Right ventricle myocardium inferior (tissue), 1 donor: ENCODE measurements at regions of chr1 and their contacts with region 1.

Region 1: DNA sequence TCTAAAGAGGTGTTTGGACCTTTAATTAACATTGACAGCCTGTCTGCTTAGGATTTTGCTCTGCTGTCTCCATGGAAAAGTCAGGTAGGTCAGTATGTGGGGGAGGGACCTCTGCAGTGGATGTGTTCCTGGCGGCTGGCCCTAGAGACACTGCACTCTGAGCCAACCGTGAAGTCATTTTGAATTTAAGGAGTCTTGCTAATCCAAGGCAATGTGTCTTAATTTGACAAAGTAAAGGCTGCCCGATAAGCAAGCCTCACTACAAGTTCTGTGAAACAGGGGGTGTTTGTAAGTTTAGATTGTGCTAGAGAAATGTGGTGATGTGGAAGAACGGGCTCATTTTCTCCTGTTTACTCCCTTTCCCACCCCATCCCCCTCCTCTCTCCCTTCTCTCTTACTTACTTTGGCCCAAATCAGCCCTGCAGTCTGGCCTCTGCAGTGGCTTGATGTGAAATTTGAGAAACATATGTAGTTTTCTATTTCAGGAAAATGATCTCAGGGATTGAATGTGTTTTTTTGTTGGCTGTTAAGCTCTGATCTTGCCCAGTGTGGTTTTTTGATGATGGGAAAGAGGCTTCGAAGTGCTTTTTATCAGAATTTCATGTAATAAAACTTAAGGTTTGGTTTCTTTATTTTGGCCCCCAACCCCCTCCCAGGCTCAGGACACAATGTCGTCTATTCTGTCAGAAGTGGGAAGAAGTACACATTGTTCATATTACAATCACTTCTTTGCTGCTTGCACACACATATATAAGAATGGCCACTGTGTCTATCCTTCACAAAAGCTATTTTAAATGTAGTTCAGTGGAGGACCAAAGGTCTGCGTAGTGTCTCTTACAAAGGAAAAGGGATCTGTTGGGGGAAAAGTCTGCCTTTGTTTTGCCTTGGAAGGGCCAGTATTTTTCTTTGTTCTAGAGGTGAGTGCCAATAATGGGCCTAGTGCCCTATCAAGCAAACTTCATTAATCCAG is 96.6 kb downstream of the FGGY start:
- DNase-seq: peak; percentile 79
- ATAC-seq: peak; percentile 92

Region 2: DNA sequence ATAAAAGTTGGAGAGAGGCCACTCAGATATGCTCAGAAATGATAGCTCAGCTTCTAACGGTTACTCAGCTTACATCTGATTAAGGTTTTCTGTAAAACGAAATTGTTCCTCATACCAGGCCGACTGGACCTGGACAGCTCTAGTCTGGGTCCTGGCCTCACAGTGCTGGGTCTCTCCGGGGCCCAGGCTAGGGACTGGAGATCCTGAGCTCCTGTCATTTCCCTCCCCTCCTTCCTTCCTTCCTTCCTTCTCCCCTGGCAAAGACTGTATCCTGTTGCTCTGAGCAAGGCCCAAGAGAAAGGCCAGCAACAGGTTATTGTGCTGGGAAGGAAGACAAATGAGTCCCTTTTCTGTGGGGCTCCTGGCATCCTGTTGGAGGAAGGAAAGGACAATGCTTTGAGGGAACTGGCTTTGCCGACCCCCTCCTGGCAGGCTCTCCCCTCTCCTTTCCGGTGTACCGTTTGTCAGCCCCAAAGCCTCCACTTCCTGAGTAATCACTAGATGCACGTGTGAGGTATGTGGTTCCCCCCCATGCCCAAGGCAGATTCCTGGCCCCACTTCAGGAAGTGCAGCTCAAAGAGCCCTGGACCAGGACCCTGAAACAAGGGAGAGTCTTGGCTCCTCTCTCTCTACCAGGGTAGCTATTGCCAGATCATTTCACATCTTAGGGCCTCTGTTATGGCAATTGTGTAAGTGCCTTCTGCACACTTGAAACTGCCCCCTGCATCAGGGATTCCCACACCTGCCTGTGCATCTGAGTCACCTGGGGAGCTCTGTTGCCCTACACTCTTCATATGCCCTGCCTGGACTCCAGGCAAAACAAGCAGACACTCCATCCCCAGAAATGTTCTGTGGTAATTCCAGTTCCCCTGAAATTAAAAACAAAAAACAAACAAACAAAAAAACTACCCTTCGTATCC is 309.3 kb before region 1 on chr1:
- intact Hi-C with region 1: no loop called
- DNase-seq: no peak
- ATAC-seq: peak; percentile 61

Region 3: GRCh38 chr1:59427155-59427554 is 33.7 kb after region 1 on chr1:
- intact Hi-C with region 1: loop called (anchors 5 kb)
- DNase-seq: no peak
- ATAC-seq: peak; percentile 21

Region 4: GRCh38 chr1:59446257-59446901 is 52.9 kb after region 1 on chr1:
- intact Hi-C with region 1: loop called (anchors 5 kb)
- DNase-seq: no peak
- ATAC-seq: peak; percentile 79